Endothelial cell of umbilical vein (primary cell): ENCODE measurements at regions of chr1 and their contacts with region 1.

Region 1: GRCh38 chr1:23867953-23868556 is at the start of gene FUCA1:
- DNase-seq: peak; percentile 90
- H3K4me3 ChIP-seq: peak within 1 kb of the TSS; percentile 49 to 61 (median 52)
- H3K27ac ChIP-seq: no peak within 1 kb of the TSS
- H3K4me1 ChIP-seq: peaks cover 4% of the 10 kb centered on the region
- H3K27me3 ChIP-seq: peaks cover 4 to 10% of the 10 kb centered on the region in 2 experiments
- CTCF ChIP-seq: peak; percentile 91 to 95
- POLR2A ChIP-seq: no peak
- total RNA-seq, gene FUCA1: 4.3 and 4.9 TPM in 2 replicates

Region 2: DNA sequence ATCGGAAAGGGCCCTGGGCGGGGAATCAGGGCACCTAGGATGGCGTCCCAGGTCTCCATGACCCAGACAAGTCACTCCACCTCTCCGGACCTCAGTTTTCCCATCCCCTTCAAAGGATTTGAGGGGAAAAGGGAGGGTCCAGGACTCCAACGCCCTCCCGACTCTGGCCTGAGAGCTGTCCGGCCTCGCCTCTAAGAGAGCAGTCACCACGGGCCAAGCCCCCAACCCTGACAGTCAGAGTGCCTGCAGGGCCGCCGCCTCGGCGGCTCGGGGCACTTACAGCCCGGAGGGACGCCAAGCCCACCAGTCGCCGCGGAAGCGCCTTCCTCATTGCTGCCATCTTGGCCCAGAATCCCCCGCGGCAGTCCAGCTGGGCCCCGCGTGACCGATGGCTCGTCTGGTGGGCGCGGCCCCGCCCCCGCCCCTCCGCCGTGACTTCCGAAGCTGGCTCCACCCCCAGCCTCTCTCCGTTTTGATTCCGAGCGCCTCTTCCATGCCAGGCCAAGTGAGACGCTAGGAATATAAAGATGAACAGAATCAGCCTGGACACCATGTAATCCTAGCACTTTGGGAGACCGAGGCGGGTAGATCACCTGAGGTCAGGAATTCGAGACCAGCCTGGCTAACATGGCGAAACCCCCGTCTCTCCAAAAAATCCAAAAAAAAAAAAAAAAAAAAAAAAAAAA is 42.8 kb before region 1 on chr1 and contains the start of gene HMGCL:
- CTCF ChIA-PET with region 1: interaction called, 4 read pairs
- POLR2A ChIA-PET with region 1: interaction called, 3 read pairs
- dilution Hi-C with region 1: no loop called
- intact Hi-C with region 1: loop called (anchors 1 kb)
- DNase-seq: peak; percentile 91
- H3K4me3 ChIP-seq: peak within 1 kb of the TSS; percentile 91 to 99 (median 99)
- H3K27ac ChIP-seq: peak within 1 kb of the TSS; percentile 76
- H3K4me1 ChIP-seq: peaks cover 9% of the 10 kb centered on the region
- H3K27me3 ChIP-seq: no peaks in the 10 kb centered on the region
- CTCF ChIP-seq: no peak
- POLR2A ChIP-seq: peak; percentile 95
- total RNA-seq, gene HMGCL: 23.9 and 24.2 TPM in 2 replicates

Region 3: GRCh38 chr1:23838401-23838866 is 29.6 kb before region 1 on chr1:
- CTCF ChIA-PET with region 1: no interaction called
- POLR2A ChIA-PET with region 1: no interaction called
- dilution Hi-C with region 1: no loop called
- intact Hi-C with region 1: loop called (anchors 2 kb)
- DNase-seq: peak; percentile 58
- H3K4me3 ChIP-seq: peak overlapping the region in 1 of 3 experiments; percentile 40
- H3K27ac ChIP-seq: no peak overlapping the region
- H3K4me1 ChIP-seq: no peaks in the 10 kb centered on the region
- H3K27me3 ChIP-seq: peaks cover 6 to 12% of the 10 kb centered on the region in 2 experiments
- CTCF ChIP-seq: no peak
- POLR2A ChIP-seq: no peak